Activated CD4-positive, alpha-beta T cell treated with anti-CD3 and anti-CD28 coated beads for 36 hours (primary cell): ENCODE measurements at regions of chr16 and their contacts with region 1.

Region 1: DNA sequence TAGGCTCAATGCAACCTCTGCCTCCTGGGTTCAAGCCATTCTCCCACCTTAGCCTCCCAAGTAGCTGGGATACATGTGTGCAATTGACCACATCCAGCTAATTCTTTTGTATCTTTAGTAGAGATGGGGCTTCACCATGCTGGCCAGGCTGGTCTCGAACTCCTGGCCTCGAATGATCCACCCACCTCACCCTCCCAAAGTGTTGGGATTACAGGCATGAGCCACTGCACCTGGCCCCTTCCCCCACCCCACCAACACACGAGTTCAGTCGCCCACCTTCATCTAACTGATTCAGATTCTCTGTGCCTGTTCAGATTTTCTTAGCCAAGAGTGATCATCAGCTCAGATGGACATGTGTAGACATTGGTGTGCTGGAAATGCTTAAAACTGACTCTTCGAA is 25.0 kb upstream of the METTL9 start:
- DNase-seq: no peak
- ATAC-seq: no peak
- H3K4me3 Mint-ChIP-seq: no peak overlapping the region
- H3K27ac Mint-ChIP-seq: no peak overlapping the region
- H3K4me1 Mint-ChIP-seq: no peaks in the 10 kb centered on the region
- H3K27me3 Mint-ChIP-seq: peaks cover 1% of the 10 kb centered on the region

Region 2: GRCh38 chr16:21283521-21284289 is 290.7 kb before region 1 on chr16:
- CTCF ChIA-PET with region 1: no interaction called
- POLR2A ChIA-PET with region 1: no interaction called
- intact Hi-C with region 1: loop called in 1 of 2 experiments (anchors 10 kb)
- DNase-seq: peak; percentile 24
- ATAC-seq: peak; percentile 47
- H3K4me3 Mint-ChIP-seq: peak overlapping the region; percentile 32
- H3K27ac Mint-ChIP-seq: no peak overlapping the region
- H3K4me1 Mint-ChIP-seq: peaks cover 3% of the 10 kb centered on the region
- H3K27me3 Mint-ChIP-seq: peaks cover 54% of the 10 kb centered on the region

Region 3: GRCh38 chr16:21638573-21638975 is 64.2 kb after region 1 on chr16:
- CTCF ChIA-PET with region 1: no interaction called
- POLR2A ChIA-PET with region 1: no interaction called
- intact Hi-C with region 1: no loop called
- DNase-seq: peak; percentile 57
- ATAC-seq: peak; percentile 92
- H3K4me3 Mint-ChIP-seq: no peak overlapping the region
- H3K27ac Mint-ChIP-seq: peak overlapping the region; percentile 74
- H3K4me1 Mint-ChIP-seq: peaks cover 31% of the 10 kb centered on the region
- H3K27me3 Mint-ChIP-seq: no peaks in the 10 kb centered on the region

Region 4: DNA sequence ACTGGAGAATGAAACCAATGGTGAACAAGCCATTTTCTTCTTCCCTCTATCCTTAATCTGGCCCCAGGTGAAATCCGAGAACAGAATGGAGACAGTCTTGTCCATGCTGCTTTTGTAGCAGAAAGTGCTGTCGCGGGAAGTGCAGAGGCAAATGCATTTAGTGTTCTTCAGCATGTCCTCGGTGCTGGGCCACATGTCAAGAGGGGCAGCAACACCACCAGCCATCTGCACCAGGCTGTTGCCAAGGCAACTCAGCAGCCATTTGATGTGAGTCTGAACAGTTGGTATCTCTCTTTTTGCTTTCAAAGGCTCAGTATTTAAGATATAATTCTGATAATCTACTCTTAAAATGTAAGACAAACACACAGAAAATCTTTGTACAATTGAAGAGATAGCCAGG is 397.5 kb after region 1 on chr16:
- CTCF ChIA-PET with region 1: no interaction called
- POLR2A ChIA-PET with region 1: no interaction called
- intact Hi-C with region 1: no loop called
- DNase-seq: no peak
- ATAC-seq: no peak
- H3K4me3 Mint-ChIP-seq: no peak overlapping the region
- H3K27ac Mint-ChIP-seq: no peak overlapping the region
- H3K4me1 Mint-ChIP-seq: no peaks in the 10 kb centered on the region
- H3K27me3 Mint-ChIP-seq: no peaks in the 10 kb centered on the region